ENCODE measurements at regions of chr17 and their contacts with region 1.

Region 1: GRCh38 chr17:82450170-82451106 is at the start of gene CYBC1:
- DNase-seq: peak in 1 of 2 experiments; percentile 95
- H3K4me3 ChIP-seq: peak within 1 kb of the TSS; percentile 66 to 97 (median 86)
- H3K27ac ChIP-seq: peak within 1 kb of the TSS; percentile 49; the same call in 1 of the 2 replicates
- H3K4me1 ChIP-seq: peaks cover 0 to 9% (median 3%) of the 10 kb centered on the region in 4 experiments; a peak in 4 of 7 replicates
- H3K27me3 ChIP-seq: no peaks in the 10 kb centered on the region
- CTCF ChIP-seq: no peak
- EP300 ChIP-seq: peak in 1 of 2 experiments; percentile 39; a peak in 1 of 3 replicates
- POLR2A ChIP-seq: peak; percentile 46 to 76
- RAD21 ChIP-seq: no peak
- total RNA-seq, gene CYBC1: 66.7 and 74.6 TPM in 2 replicates

Region 2: GRCh38 chr17:82434216-82434565 is 16.2 kb before region 1 on chr17:
- CTCF ChIA-PET with region 1: interaction called, 3 read pairs
- POLR2A ChIA-PET with region 1: interaction called, 12 read pairs
- DNase-seq: no peak
- H3K4me3 ChIP-seq: no peak overlapping the region
- H3K27ac ChIP-seq: no peak overlapping the region
- H3K4me1 ChIP-seq: no peaks in the 10 kb centered on the region; a peak in 1 of 7 replicates
- H3K27me3 ChIP-seq: no peaks in the 10 kb centered on the region
- CTCF ChIP-seq: no peak
- EP300 ChIP-seq: no peak
- POLR2A ChIP-seq: no peak
- RAD21 ChIP-seq: no peak

Region 3: DNA sequence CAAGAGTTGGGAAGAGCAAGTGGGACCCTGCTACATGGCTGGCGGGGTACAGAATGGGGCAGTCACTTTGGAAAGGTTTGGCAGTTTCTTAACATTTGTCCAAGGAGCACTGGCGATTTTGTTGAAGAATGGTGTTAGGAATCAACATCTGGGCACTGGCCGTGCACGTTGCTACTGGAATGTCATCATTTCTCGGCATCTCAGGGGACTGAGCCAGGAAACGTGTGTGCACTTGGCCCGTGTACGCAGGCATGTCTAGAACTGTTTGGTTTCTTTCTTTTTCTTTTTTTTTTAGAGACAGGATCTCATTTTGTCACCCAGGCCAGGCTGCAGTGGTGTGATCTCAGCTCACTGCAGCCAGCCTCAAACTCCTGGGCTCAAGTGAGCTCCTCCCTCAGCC is 51.8 kb after region 1 on chr17:
- CTCF ChIA-PET with region 1: no interaction called
- POLR2A ChIA-PET with region 1: no interaction called
- DNase-seq: no peak
- H3K4me3 ChIP-seq: no peak overlapping the region
- H3K27ac ChIP-seq: no peak overlapping the region
- H3K4me1 ChIP-seq: no peaks in the 10 kb centered on the region
- H3K27me3 ChIP-seq: peaks cover 0 to 9% (median 7%) of the 10 kb centered on the region in 4 experiments; a peak in 4 of 7 replicates
- CTCF ChIP-seq: no peak
- EP300 ChIP-seq: no peak
- POLR2A ChIP-seq: no peak
- RAD21 ChIP-seq: no peak

Measured in H1 (cell line).